GM10248 (cell line): ENCODE measurements at regions of chr10 and their contacts with region 1.

Region 1: GRCh38 chr10:26805567-26806245 is 55.1 kb downstream of the ABI1 start:
- DNase-seq: no peak
- CTCF ChIP-seq: no peak

Region 2: GRCh38 chr10:26821699-26822570 is 16.2 kb after region 1 on chr10:
- CTCF ChIA-PET with region 1: interaction called, 10 read pairs
- POLR2A ChIA-PET with region 1: no interaction called
- DNase-seq: no peak
- CTCF ChIP-seq: no peak

Region 3: GRCh38 chr10:26969145-26969926 is 163.6 kb after region 1 on chr10:
- CTCF ChIA-PET with region 1: no interaction called
- POLR2A ChIA-PET with region 1: no interaction called
- DNase-seq: peak; percentile 35
- CTCF ChIP-seq: no peak